ENCODE measurements at regions of chr9 and their contacts with region 1.

Region 1: DNA sequence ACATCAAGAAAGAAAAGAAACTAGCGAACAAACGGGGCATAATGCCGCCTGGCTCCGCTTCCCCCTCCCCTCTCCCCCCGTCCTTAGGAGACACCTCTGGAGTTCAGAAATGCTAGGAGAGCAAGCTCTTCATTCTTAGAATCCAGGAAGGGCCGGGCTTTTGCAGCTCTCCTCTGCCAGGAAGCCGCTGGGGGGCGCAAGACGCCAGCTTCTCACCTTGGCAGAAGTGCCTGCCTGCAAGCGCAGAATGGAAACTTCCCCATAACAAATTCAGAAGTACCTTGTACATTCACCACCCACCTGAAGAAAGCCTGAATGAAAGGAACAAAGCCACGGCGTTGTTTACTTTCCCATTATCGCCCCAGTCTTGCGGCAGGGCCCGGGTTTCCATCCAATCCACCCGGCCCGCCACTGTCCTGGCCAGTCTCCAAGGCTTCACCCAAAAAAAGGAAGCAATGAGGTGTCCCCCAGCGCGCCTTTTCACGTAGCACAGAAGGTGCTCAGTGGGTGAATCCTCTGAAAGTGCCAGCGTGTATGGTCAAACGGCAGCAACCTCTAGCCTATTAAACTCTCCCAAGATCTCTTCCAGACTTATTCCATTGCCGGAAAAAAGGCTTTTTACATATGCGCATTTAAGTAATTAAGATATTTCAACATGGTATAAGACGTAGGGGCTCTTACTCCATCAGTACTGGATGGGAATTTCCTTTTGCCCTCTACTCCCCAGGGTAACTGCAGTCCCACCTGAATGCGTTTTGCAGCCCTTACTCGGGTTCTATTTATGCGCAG is 1.6 kb upstream of the GADD45G start:
- DNase-seq: peak; percentile 88 to 92 (median 89)
- ATAC-seq: peak; percentile 16 to 53 (median 32)
- H3K4me3 ChIP-seq: peak overlapping the region in 11 of 12 donors; percentile 1 to 95 (median 86)
- H3K27ac ChIP-seq: peak overlapping the region in 9 of 12 donors; percentile 8 to 98 (median 95)
- H3K4me1 ChIP-seq: peaks cover 6 to 48% (median 33%) of the 10 kb centered on the region in 12 donors
- H3K27me3 ChIP-seq: peaks cover 0 to 3% (median 0%) of the 10 kb centered on the region in 9 donors
- CTCF ChIP-seq: peak; percentile 79 to 90 (median 85)
- POLR2A ChIP-seq: no peak

Region 2: DNA sequence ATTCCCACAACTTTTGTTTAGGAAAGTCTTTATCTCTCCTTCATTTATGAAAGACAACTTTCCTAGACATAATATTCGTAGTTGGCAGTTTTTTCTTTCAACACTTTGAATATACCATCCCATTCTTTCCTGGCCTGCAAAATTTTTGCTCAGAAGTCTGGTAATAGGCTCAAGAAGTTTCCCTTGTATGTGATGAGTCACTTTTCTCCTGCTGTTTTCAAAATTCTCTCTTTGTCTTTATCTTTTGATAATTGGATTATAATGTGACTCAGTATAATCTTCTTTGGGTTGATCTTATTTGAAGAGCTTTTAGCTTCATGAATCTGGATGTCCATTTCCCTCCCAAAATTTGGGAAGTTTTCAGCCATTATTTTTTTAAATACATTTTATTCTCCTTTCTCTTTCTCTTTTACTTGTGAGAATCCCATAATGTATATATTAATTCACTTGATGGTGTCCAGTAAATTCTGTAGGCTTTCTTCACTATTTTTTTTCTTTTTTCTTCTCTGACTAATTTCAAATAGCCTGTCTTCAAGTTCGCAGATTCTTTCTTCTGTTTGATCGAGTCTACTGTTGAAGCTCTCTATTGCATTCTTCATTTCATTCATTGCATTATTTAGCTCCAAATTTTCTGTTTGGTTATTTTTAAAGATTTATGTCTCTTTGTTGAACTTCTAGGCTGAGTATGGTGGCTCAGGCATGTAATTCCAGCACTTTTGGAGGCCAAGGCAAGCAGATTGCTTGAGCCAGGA is 329.5 kb before region 1 on chr9:
- intact Hi-C with region 1: no loop called
- DNase-seq: no peak
- ATAC-seq: no peak
- H3K4me3 ChIP-seq: no peak overlapping the region
- H3K27ac ChIP-seq: no peak overlapping the region
- H3K4me1 ChIP-seq: no peaks in the 10 kb centered on the region
- H3K27me3 ChIP-seq: no peaks in the 10 kb centered on the region
- CTCF ChIP-seq: no peak
- POLR2A ChIP-seq: no peak

Region 3: DNA sequence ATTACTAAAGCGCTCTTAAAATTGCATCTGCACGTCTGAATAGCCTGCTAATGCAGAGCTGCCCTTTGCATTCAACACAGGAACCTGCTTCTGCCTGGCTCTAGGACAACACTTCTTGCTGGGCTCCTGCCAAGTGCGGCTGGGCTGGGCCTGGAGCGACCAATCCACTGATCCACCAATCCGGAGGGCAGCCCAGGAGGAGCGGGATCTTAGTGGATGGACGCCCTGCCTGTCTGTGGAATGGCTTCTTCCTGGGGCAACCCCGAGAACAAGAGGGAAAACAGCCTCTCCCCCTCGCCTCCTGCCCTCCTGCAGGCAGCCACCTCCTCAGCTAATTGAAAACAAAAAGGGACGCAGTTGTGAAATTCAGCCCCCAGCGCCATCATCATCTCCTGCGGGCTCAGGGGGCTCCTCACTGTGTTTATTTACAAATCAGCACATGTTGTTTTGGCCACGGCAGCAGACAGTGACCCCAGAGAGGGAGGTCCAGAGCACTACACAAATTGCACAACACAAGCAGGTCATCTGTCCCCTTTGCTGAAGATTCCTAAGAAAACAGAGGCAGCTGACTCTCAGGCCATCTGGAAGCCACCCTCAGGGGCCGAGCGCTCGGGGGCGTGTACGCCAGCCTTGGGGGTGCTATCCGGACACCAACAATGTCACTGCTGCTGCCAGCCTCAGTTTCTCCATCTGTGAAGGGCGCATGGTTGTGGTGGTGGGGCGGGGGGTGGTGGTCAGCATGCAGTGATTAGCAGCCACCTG is 59.0 kb after region 1 on chr9:
- intact Hi-C with region 1: loop called in 6 of 10 experiments (anchors 5 to 10 kb)
- DNase-seq: peak; percentile 98 to 99 (median 98)
- ATAC-seq: peak; percentile 95 to 98 (median 97)
- H3K4me3 ChIP-seq: peak overlapping the region in 10 of 12 donors; percentile 15 to 53 (median 44)
- H3K27ac ChIP-seq: peak overlapping the region; percentile 2 to 83 (median 77)
- H3K4me1 ChIP-seq: peaks cover 5 to 41% (median 18%) of the 10 kb centered on the region in 12 donors
- H3K27me3 ChIP-seq: no peaks in the 10 kb centered on the region
- CTCF ChIP-seq: no peak
- POLR2A ChIP-seq: no peak

Region 4: DNA sequence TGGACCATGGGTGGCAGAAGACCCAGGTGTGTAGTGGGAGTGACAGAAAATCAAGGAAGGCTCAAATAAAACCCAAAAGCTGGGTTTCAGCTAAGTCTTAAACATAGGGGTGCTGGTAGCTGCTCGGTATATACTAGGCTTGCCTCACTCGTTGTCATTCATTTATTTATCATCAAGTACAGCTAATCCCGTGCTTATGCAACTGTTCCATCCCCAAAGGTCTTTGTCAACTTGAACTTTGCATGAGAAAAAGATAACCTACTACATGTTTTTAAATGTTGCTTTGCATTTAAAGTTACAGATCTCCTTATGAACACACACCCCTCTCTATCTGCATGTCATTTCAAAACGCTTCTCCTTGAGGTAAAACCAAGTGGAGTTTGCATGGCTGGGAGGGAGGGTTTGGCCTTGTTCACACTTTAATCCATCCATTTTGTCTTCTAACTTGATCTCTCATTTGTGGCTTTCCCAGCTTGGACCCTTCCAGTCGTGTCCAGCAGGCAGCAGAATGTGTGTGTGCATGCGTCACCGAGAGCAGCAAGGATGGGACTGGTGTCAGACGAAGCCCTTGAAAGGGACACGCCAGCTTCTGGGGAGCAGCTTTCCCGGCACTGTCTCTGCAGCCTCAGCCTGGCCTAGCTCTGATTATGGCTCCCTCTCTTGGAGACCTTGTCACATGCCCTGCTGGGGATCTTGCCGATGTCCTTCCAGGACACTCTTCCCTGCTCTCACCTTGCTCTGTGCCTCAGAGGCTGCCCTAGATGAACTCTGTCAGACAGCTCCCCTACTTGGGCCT is 135.2 kb after region 1 on chr9:
- intact Hi-C with region 1: loop called in 5 of 10 experiments (anchors 5 to 10 kb)
- DNase-seq: no peak
- ATAC-seq: peak; percentile 40 to 62 (median 46)
- H3K4me3 ChIP-seq: no peak overlapping the region
- H3K27ac ChIP-seq: no peak overlapping the region
- H3K4me1 ChIP-seq: peaks cover 0 to 31% (median under 1%) of the 10 kb centered on the region in 12 donors
- H3K27me3 ChIP-seq: no peaks in the 10 kb centered on the region
- CTCF ChIP-seq: peak in 5 of 12 donors; percentile 11 to 20 (median 13)
- POLR2A ChIP-seq: no peak

Region 5: DNA sequence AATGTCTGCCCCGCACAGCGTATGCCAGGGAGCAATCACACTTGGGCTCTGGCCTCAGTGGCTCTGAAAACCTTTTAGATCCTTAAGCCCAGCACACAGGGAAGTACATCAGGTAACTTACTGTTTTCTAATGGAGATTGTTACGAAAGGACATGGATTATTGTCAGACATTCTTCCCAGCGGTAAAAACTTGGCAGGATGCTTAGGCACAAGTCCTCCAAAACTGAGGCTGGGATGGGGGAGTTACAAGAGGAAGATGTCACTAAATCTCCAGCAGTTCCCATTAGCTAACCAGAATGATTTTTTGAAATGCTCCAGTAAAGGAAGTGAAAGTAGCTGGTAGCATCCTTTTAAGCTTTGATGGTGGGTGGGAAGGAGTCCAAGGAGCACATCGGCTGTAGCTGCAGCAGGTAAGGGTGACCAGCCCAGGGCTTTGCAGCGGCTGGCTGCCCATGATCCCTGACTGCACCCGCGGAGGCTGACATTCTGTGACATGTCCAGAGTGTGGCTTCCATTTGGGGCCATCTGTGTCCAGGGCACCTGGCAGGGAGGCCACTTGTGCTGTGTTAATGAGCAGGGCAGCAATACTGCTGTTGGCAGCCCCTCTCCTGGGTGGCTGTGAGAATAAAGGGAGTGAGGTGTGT is 167.5 kb after region 1 on chr9:
- intact Hi-C with region 1: loop called in 1 of 10 experiments (anchors 10 kb)
- DNase-seq: peak in 1 of 5 donors; percentile 42
- ATAC-seq: peak; percentile 57 to 82 (median 68)
- H3K4me3 ChIP-seq: no peak overlapping the region
- H3K27ac ChIP-seq: no peak overlapping the region
- H3K4me1 ChIP-seq: peaks cover 0 to 7% (median 0%) of the 10 kb centered on the region in 12 donors
- H3K27me3 ChIP-seq: no peaks in the 10 kb centered on the region
- CTCF ChIP-seq: no peak
- POLR2A ChIP-seq: no peak

Region 6: GRCh38 chr9:89786331-89787054 is 183.3 kb after region 1 on chr9:
- intact Hi-C with region 1: no loop called
- DNase-seq: peak in 1 of 5 donors; percentile 48
- ATAC-seq: peak in 3 of 4 donors; percentile 55 to 79 (median 68)
- H3K4me3 ChIP-seq: no peak overlapping the region
- H3K27ac ChIP-seq: peak overlapping the region in 1 of 12 donors; percentile 71
- H3K4me1 ChIP-seq: peaks cover 0 to 22% (median 0%) of the 10 kb centered on the region in 12 donors
- H3K27me3 ChIP-seq: peaks cover 0 to 5% (median 0%) of the 10 kb centered on the region in 9 donors
- CTCF ChIP-seq: no peak
- POLR2A ChIP-seq: no peak

Region 7: GRCh38 chr9:89872956-89873707 is 270.0 kb after region 1 on chr9:
- intact Hi-C with region 1: loop called in 8 of 10 experiments (anchors 1 to 10 kb)
- DNase-seq: peak in 4 of 5 donors; percentile 56 to 65 (median 58)
- ATAC-seq: peak; percentile 80 to 83 (median 80)
- H3K4me3 ChIP-seq: no peak overlapping the region
- H3K27ac ChIP-seq: peak overlapping the region; percentile 74 to 99 (median 90)
- H3K4me1 ChIP-seq: peaks cover 1 to 60% (median 36%) of the 10 kb centered on the region in 12 donors
- H3K27me3 ChIP-seq: no peaks in the 10 kb centered on the region
- CTCF ChIP-seq: no peak
- POLR2A ChIP-seq: peak in 1 of 2 donors; percentile 17

Region 8: DNA sequence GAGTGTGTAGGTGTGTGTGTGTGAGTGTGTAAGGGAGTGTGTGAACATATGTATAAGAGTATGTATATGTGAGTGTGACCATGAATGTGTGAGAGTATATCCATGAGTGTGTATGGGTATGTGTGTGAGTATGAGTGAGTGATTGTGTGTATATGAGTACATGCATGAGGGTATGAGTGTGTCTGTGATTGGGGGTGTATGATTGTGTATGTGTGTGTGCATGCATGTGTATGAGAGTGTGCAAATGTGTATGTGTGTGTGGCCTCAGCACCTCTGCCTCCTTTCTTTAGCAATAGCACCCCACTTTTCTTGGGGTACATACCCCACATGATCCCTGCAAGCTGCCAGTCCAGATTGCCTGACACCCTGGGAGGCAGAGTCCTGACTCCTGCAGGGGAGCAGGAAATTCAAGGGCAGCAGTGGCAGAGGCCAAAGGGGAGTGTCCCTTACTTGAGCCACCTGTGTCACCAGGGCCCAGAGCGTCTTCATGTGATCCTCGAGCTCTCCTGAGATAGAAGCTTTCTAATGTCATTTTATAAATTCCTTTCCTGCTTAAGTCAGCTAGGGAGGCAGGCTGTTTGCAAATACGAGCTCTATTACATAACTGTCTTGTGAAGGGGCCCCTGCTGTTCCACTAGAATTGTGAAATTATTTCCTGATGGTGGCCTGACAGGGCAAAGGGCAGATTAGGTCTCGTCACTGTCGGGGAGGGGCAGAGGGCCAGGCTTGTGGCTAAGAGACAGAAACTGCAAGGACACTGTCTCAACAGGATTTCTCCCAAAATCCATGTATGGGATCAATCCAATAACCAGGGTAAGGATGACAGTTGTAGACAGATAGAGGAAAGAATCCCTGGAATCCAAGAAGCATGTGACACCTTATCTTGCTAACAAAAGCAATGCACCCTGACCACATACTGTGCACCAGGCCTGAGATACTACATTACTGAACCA is 390.8 kb after region 1 on chr9:
- intact Hi-C with region 1: loop called in 4 of 10 experiments (anchors 5 to 10 kb)
- DNase-seq: peak in 4 of 5 donors; percentile 52 to 63 (median 61)
- ATAC-seq: peak in 3 of 4 donors; percentile 48 to 59 (median 55)
- H3K4me3 ChIP-seq: no peak overlapping the region
- H3K27ac ChIP-seq: peak overlapping the region in 8 of 12 donors; percentile 3 to 85 (median 51)
- H3K4me1 ChIP-seq: peaks cover 0 to 41% (median 26%) of the 10 kb centered on the region in 12 donors
- H3K27me3 ChIP-seq: no peaks in the 10 kb centered on the region
- CTCF ChIP-seq: no peak
- POLR2A ChIP-seq: no peak